ENCODE measurements at regions of chr20 and their contacts with region 1.

Region 1: DNA sequence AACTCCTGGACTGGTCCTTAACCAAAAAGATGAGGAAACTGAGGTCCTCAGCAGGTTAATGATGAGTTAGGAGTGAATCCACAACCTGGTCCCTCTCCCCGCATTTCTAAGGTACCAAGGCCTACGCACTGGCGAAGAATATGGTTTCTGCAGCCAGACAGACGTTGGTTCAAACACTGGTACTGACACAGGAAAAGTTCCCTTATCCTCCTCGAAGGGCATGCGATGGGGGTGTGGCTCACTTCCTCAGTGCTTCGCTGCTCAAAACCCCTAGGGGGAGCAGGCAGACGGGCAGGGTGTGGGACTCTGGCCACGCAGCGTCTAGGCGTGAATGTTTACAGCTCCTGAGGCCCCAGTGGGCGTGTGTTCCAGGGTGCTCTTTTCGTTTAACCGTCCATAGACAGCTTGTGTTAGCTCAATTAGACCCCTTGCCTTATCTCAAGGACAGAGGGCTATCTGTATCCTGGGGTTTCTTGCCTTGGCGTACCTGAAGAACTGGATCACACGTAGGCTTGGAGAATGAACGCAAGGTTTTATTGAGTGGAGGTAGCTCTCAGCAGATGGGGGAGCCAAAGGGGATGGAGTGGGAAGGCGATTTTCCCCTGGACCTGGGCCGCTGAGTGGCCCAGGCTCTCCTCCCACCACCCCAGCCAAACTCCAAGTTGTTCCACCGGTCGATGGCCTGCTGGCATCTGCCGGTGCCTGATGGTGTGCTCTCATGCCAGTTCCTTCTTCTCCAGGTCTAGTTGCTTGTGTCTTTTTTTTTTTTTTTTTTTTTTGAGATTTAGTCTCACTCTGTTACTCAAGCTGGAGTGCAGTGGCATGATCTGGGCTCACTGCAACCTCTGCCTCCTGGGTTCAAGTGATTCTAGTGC is 31.8 kb upstream of the PTPN1 start:
- DNase-seq: peak; percentile 74
- H3K4me3 Mint-ChIP-seq: no peak overlapping the region
- H3K27ac Mint-ChIP-seq: peak overlapping the region; percentile 33
- H3K4me1 Mint-ChIP-seq: peaks cover 44% of the 10 kb centered on the region
- H3K27me3 Mint-ChIP-seq: no peaks in the 10 kb centered on the region

Region 2: DNA sequence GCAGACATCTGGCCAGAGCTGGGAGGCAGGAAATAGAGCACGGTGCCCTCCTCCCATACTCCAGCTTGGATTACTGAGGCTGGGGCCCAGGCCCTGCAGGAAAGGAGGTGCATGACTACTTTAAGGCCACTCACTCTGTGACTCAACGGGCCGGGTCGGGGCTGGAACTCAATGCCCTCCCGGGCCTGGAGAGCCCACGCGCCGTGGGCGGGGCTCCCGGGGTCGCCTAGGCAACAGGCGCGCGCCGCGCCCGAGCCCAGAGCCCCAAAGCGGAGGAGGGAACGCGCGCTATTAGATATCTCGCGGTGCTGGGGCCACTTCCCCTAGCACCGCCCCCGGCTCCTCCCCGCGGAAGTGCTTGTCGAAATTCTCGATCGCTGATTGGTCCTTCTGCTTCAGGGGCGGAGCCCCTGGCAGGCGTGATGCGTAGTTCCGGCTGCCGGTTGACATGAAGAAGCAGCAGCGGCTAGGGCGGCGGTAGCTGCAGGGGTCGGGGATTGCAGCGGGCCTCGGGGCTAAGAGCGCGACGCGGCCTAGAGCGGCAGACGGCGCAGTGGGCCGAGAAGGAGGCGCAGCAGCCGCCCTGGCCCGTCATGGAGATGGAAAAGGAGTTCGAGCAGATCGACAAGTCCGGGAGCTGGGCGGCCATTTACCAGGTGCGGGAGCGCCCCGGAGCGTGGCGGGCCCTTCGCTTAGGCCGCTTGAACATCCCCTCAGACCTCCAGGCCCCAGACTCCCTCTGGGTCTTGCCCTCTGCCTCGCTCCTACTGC is 31.7 kb after region 1 on chr20 and contains the start of gene PTPN1:
- intact Hi-C with region 1: loop called (anchors 1 kb)
- DNase-seq: peak; percentile 99
- H3K4me3 Mint-ChIP-seq: peak within 1 kb of the TSS; percentile 93
- H3K27ac Mint-ChIP-seq: peak within 1 kb of the TSS; percentile 86
- H3K4me1 Mint-ChIP-seq: peaks cover 43% of the 10 kb centered on the region
- H3K27me3 Mint-ChIP-seq: no peaks in the 10 kb centered on the region
- total RNA-seq, gene PTPN1: 93.2 and 94.6 TPM in 2 replicates

Region 3: DNA sequence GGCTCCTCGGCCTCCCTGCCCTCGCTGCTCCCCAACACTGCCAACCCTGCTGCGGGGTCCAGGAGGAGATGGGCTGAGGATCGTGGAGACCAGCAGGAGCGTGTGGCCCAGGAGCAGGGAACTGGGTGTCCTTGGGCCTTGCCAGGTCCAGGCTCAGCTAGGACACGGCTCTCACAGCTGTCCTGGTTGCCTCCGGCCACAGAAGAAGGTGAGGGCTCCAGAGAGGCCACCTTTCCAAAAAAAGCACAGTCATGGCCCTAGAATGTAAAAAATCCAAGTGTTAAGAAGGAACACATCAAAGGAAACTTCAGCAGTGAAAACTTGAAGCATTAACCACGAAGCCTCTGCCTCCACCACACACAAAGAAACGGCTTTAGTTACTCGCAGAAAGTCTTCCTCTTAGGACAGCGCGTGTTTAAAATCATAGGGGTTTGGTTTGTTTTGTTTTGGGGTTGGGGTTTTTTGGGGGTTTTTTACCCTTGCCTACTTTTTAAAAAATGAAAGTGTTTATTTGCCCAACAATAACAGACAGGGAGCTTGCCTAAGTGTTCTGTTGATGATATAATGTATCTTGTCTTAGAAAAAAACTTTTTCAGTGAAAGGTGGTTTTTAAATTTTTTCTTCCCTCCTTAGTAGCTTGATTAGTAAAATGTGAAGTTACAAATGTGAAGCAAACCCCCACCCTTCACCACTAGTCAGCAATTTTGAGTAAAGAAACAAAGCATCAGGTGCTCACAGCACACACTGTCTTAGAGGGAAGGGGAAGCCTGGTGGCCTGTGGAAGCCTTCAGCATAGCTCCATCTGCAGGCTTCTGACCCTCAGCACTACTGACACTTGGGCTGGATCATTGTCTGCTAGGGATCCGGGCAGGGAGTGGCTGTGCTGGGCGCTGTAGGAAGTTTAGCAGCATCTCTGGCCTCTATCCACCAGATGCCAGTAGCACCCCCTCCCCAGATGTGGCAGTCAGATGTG is 91.8 kb after region 1 on chr20:
- intact Hi-C with region 1: loop called (anchors 1 kb)
- DNase-seq: peak; percentile 40
- H3K4me3 Mint-ChIP-seq: peak overlapping the region; percentile 34
- H3K27ac Mint-ChIP-seq: peak overlapping the region; percentile 85
- H3K4me1 Mint-ChIP-seq: peaks cover 59% of the 10 kb centered on the region
- H3K27me3 Mint-ChIP-seq: no peaks in the 10 kb centered on the region

Region 4: DNA sequence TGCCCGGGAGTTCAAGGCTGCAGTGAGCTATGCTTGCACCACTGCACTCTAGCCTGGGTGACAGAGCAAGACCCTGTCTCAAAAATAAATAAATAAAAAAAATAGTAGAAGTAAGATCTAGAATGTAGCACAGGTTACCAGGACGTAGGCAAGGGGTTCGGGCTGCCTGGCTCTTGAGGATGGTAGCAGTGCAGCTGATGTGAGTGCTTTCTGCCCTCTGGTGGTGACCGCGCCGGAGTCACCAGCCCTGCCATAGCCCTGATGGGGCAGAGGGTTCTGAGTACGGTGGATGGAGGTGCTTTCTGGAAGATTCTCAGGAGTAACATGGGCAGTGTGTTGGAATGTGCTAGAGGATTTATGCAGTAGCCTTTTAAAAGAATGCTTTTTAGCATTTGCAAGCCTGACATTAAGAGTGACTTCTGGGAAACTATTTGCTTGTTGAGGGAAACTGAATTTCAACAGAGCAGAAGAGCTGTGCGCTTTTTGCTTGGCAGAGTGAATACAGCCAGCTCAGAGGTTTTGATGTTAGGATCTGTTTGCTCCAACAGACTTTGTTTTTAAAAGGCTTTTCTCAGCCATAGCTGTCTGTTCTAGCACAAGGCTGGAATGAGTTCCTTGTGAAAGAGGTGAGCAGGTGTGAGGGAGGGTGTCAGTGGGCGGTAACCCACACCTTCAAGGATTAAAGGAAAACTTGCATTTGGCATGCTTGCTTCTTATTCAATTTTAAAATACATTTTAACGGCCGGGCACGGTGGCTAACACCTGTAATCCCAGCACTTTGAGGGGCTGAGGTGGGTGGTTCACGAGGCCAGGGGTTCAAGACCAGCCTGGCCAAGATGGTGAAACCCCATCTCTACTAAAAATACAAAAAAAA is 97.7 kb after region 1 on chr20:
- intact Hi-C with region 1: loop called (anchors 1 kb)
- DNase-seq: peak; percentile 44
- H3K4me3 Mint-ChIP-seq: no peak overlapping the region
- H3K27ac Mint-ChIP-seq: no peak overlapping the region
- H3K4me1 Mint-ChIP-seq: peaks cover 25% of the 10 kb centered on the region
- H3K27me3 Mint-ChIP-seq: no peaks in the 10 kb centered on the region

Measured in activated T-helper 2 cell treated with anti-CD3 and anti-CD28 coated beads, Interferon-gamma antibody, Interleukin-2, Interleukin-4, amounts not matched to agents 10 μg/mL and 5 μg/mL and 100 μg/mL, durations not matched to agents 14 hours and 24 hours and 36 hours (primary cell).